Posterior vena cava (tissue), 2 donors: ENCODE measurements at regions of chr9 and their contacts with region 1.

Region 1: DNA sequence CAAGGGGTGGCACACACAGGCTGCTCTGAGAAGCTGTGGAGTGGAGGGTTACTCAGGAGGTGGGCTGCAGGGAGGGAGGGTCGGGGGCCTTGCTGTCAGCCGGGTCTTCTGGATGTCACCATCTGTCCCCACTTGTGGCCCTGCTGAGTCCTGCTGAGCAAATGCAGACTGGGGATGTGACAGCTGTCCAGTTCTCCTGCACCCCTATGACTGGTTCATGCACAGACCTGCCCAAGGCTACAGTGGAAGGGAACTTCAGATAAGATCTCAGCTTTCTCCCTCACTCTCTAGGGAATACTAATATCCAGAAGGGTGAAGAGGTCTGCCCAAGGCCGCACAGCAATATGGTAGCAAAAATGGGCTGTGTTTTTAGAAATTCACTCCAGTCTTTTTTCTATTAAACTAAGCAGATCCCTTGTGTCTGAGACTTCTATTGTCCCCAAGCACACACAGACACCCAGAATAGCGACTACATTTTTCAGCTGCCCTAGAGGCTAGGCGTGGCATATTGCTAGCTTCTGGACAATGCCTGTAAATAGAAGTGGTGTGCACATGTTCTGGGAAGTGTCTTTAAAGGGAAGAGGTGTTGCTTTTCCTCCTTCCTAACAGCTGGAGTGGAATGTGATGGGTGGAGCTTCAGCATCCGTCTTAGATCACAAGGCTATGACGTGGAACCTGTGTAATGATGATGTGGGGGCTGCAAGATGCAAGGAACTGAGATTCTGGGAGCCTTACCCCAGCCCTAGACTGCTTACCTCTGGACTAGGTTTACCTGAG is 51.1 kb upstream of the TBC1D2 start:
- DNase-seq: no peak

Region 2: GRCh38 chr9:98341157-98342097 is 34.9 kb after region 1 on chr9:
- intact Hi-C with region 1: loop called in 1 of 2 experiments (anchors 1 kb)
- DNase-seq: no peak